ENCODE measurements at regions of chr19 and their contacts with region 1.

Region 1: GRCh38 chr19:17390665-17391370 is 3.2 kb downstream of the CCDC194 start:
- DNase-seq: peak; percentile 29
- H3K4me3 ChIP-seq: peak overlapping the region; percentile 63
- CTCF ChIP-seq: peak; percentile 76

Region 2: GRCh38 chr19:17322854-17323253 is 68.0 kb before region 1 on chr19:
- CTCF ChIA-PET with region 1: no interaction called
- POLR2A ChIA-PET with region 1: no interaction called
- DNase-seq: no peak
- H3K4me3 ChIP-seq: no peak overlapping the region
- CTCF ChIP-seq: no peak

Region 3: DNA sequence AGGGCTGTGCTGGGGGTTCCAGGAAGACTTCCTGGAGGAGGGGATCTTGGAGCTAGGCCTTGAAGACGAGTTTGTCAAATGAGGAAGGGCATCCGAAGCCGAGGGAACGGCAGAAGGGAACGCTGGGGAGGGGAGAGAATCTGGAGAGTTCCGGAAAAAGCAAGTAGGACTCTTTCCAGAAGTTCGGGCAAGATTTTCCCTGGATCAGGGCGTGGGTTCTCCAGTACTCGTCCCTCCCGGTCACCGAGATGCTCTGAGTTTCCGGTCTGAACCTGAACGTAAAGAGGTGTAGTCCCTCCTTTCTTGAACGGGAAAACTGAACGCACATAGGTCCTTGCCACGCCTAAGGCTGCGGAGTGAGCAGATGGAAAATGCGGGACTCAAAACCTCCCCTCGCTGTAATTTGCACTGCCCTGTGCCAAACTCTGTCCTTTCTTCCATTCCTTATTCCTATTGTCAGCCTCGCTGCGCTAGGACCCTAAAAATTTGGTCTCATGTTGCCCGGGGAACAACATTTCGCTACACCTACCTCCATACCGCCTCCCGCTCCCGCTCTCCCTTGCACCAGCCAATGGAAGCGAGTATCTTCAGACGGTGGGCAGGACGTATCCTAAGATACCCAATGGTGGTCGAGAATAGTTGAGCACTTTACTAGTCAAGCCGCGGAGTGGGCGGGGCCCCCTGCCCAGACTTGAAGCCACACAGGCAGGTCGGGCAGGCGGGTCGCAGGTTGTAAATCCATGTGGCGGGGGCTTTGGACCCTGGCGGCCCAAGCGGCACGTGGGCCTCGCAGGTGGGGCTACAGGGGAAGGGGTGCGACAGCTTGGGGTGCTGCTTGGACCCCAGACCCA is 53.7 kb before region 1 on chr19 and contains the start of gene GTPBP3:
- CTCF ChIA-PET with region 1: interaction called, 208 read pairs
- POLR2A ChIA-PET with region 1: no interaction called
- DNase-seq: peak; percentile 91
- H3K4me3 ChIP-seq: peak within 1 kb of the TSS; percentile 86
- CTCF ChIP-seq: no peak

Region 4: DNA sequence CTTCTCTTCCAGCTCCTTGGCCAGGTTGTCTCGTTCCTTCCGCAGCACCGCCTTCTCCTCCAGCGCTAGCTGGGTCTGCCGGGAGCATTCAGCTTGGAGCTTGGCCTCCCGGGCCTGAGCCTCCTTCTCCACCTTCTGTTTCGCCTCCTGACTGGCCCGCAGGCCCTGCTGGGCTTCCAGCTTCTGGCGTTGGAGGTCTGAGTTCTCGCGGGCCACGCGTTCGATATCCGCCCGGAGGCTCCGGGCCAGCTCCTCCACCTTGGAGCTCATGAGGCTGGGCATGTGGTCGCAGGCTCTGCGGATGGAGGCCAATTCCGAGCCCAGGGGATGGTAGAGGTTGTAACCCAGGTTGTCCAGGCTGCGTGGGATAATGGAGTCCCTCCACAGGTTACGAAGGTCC is 25.5 kb before region 1 on chr19:
- CTCF ChIA-PET with region 1: interaction called, 39 read pairs
- POLR2A ChIA-PET with region 1: no interaction called
- DNase-seq: no peak
- H3K4me3 ChIP-seq: no peak overlapping the region
- CTCF ChIP-seq: no peak

Region 5: DNA sequence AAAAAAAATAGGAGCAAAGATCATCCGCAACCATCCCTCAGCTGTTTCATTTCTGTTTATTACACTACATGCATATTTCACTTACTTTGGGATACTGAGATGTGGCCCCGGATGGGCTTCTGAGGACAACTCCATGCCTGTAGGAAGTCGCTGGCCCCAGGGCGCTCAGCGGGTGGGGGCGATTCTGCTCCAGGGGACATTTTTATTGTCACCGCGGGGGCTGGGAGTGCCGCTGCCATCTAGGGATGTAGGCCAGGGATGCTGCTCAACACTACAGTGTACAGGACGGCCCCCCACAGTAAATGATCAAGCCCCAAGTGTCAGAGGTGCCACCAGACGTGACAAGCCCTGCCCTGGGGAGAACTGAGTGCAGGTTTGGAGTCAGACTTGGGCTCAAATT is 21.0 kb after region 1 on chr19:
- CTCF ChIA-PET with region 1: interaction called, 17 read pairs
- POLR2A ChIA-PET with region 1: no interaction called
- DNase-seq: no peak
- H3K4me3 ChIP-seq: no peak overlapping the region
- CTCF ChIP-seq: no peak

Measured in AG04449 (cell line).